ENCODE measurements at regions of chr9 and their contacts with region 1.

Region 1: DNA sequence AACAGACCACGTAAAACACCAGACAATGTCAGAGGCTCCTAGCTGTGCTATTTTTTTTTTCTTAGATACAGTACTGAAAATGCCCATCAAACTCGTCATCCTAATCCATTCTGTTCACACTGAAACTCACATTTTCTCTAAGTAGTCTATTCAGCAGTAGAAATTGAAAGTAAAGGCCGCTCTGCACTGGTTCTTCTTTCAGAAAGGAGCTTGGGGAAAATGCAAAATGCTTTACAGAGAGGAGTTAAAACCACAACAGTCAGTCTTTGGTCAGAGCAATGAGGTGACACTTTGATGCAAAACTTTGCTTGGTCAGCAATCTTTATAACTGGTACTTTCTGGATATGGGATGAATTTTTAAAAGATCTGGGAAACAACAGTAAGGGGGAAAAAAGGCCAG is 43.8 kb upstream of the SUSD1 start:
- DNase-seq: peak; percentile 19
- H3K4me3 Mint-ChIP-seq: no peak overlapping the region
- H3K27ac Mint-ChIP-seq: peak overlapping the region; percentile 11
- H3K4me1 Mint-ChIP-seq: peaks cover 35% of the 10 kb centered on the region
- H3K27me3 Mint-ChIP-seq: no peaks in the 10 kb centered on the region

Region 2: DNA sequence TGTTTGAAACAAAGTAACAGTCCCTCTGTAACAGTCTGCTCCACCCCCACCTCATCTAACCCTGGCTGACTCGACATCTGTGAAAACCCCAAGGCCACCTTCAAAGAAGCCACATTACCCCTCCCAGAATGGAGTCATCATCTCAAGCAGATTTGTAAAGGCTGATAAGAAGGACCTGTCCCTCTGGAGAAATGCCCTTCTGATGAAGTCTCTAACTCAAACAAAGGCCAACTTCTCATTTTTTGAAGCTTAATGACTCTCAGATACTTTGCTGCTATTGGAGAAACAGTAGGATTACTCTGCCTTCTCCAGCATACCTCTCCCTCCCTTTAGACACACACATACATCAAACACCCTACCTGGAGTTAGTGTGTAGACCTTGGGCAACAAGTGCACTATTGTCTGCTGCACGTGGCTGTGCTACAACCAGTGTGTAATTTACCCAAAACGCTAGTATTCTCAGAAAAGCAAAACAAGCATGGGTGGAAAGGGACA is 38.5 kb before region 1 on chr9:
- CTCF ChIA-PET with region 1: no interaction called
- POLR2A ChIA-PET with region 1: no interaction called
- intact Hi-C with region 1: loop called (anchors 2 kb)
- DNase-seq: peak; percentile 74
- H3K4me3 Mint-ChIP-seq: peak overlapping the region; percentile 6
- H3K27ac Mint-ChIP-seq: peak overlapping the region; percentile 40
- H3K4me1 Mint-ChIP-seq: peaks cover 36% of the 10 kb centered on the region
- H3K27me3 Mint-ChIP-seq: peaks cover 5% of the 10 kb centered on the region

Region 3: GRCh38 chr9:112268413-112268812 is 49.5 kb after region 1 on chr9:
- CTCF ChIA-PET with region 1: no interaction called
- POLR2A ChIA-PET with region 1: no interaction called
- intact Hi-C with region 1: loop called (anchors 5 kb)
- DNase-seq: no peak
- H3K4me3 Mint-ChIP-seq: no peak overlapping the region
- H3K27ac Mint-ChIP-seq: no peak overlapping the region
- H3K4me1 Mint-ChIP-seq: peaks cover 24% of the 10 kb centered on the region
- H3K27me3 Mint-ChIP-seq: no peaks in the 10 kb centered on the region